ENCODE measurements at regions of chr1 and their contacts with region 1.

Region 1: DNA sequence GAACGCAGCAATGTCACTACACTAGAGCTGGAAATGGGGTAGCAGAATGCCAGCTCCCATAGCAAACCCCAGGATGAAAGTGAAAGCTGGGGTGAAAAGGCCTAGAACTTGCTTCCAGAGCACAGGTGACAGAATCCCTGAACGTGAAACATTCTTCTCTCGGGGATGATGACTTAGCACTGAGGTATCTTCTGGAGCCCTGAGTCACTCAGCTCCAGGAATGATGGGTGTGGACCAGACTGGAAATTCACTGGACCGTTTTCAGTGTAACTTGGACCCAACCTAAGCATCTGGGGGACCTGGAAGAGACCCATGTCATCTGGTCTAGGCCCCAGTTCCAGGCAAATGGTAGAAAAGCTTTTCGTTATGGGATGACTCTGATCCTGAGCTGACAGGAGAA is 108.9 kb downstream of the CDC7 start:
- DNase-seq: peak; percentile 77
- ATAC-seq: peak; percentile 36
- H3K4me3 ChIP-seq: no peak overlapping the region
- H3K27ac ChIP-seq: no peak overlapping the region; the same call in 1 of the 2 replicates
- H3K4me1 ChIP-seq: peaks cover 6% of the 10 kb centered on the region
- H3K27me3 ChIP-seq: no peaks in the 10 kb centered on the region
- CTCF ChIP-seq: no peak
- POLR2A ChIP-seq: no peak
- RAD21 ChIP-seq: no peak

Region 2: DNA sequence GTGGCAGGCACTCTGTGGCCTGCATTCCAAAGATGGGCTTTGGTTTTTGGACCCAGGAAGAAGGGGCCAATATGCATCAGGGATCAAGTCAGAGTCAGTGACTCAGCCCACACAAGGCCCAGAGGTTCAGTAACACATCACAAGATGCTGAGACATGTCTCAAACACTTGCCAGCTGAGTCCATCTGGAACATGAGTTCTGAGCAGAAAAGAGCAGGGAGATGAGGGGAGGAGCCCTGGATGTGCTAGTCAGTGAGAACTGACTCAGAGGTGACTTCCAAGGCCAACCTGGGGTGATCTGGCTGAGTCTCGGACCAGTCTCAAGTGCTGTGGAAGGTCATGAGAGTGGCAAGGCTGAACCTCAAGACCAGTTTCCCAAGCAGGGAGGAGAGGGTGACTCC is 41.2 kb after region 1 on chr1:
- CTCF ChIA-PET with region 1: no interaction called
- POLR2A ChIA-PET with region 1: no interaction called
- dilution Hi-C with region 1: no loop called
- in situ Hi-C with region 1: no loop called
- intact Hi-C with region 1: loop called (anchors 1 kb)
- DNase-seq: peak; percentile 100
- ATAC-seq: peak; percentile 98
- H3K4me3 ChIP-seq: no peak overlapping the region
- H3K27ac ChIP-seq: peak overlapping the region; percentile 73
- H3K4me1 ChIP-seq: peaks cover 15% of the 10 kb centered on the region
- H3K27me3 ChIP-seq: no peaks in the 10 kb centered on the region
- CTCF ChIP-seq: no peak
- POLR2A ChIP-seq: no peak
- RAD21 ChIP-seq: peak; percentile 37

Region 3: DNA sequence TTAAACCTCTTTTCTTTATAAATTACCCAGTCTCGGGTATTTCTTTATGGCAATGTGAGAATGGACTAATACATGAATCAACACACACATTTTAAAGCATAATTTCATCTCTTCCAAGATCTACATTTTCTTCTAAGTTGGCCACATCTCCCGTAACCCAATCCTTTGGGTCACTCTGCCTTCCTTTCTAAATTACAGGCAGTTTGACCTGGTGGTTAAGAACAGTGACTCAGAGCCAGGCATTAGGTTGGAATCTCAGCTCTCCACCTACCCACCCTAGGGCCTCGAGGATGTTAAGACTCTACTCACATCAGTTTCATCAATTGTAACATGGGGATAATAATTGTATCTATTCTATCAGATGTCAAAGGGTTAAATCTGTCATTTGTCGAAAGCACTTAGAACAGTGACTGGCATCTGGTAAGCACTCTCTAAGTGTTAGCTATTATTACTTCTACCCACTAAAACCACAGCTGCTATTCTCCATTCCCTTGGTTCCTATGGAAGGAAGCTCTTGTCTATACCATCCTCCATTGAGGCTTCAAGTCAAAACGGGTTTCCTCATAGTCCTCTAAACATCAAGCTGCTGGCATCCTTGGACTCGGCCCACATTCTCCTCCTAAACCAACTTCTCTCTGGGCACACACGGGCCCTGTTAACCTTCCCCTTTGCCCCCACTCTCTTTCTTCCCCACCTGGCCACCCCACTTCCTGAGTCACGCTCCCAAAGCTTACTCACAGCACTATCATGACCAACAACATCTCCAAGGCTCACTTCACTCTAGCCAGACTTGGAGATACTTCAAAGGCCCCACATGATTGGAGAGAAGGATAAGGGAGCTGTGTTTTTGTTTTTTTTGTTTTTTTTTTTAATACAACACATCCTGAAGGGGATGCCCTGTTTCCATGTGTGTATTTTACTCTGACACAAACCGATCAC is 159.5 kb after region 1 on chr1:
- CTCF ChIA-PET with region 1: no interaction called
- POLR2A ChIA-PET with region 1: no interaction called
- dilution Hi-C with region 1: no loop called
- in situ Hi-C with region 1: no loop called
- intact Hi-C with region 1: no loop called
- DNase-seq: peak; percentile 80
- ATAC-seq: peak; percentile 83; the same call in 1 of the 2 replicates
- H3K4me3 ChIP-seq: no peak overlapping the region
- H3K27ac ChIP-seq: no peak overlapping the region
- H3K4me1 ChIP-seq: peaks cover 1% of the 10 kb centered on the region; the same call in 1 of the 2 replicates
- H3K27me3 ChIP-seq: no peaks in the 10 kb centered on the region
- CTCF ChIP-seq: no peak
- POLR2A ChIP-seq: no peak
- RAD21 ChIP-seq: no peak